ENCODE measurements at regions of chr10 and their contacts with region 1.

Region 1: GRCh38 chr10:86376852-86377796 is 10.5 kb upstream of the GRID1 start:
- DNase-seq: peak; percentile 22
- ATAC-seq: peak; percentile 99
- H3K4me3 ChIP-seq: no peak overlapping the region
- H3K27ac ChIP-seq: no peak overlapping the region
- H3K4me1 ChIP-seq: no peaks in the 10 kb centered on the region
- H3K27me3 ChIP-seq: peaks cover 11% of the 10 kb centered on the region
- CTCF ChIP-seq: peak; percentile 100

Region 2: DNA sequence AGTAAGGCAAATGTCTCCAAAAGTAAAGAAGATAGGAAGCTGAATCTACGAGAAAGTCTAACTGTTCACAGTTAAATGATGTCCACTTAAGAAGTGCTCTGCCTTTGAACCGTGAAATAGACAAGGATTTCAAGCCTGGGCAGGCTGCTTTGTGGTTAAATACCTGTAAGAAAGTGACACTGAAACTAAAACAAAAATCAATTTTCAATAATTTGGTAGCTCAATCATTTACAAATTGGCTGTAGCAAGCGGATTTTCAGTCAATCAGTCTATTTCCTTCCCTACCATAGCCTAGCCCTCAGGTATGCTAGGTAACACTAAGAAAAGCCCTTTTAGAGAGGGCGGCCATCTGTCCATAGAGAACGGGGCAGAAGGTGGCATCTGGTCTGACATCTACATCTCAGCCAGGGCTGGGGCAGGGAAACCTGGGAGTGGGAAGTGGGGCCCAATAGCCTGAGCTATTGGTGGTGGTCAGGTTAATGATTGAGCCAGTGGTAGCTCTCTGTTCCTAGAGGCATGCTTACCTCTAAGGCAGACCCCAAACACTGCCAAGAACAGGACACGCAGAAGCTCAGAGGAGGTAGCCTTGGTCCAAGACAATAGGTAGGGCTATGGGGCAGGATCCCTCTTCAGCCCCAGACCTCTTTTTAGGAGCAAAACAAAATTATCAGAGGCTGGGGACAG is 1825.5 kb before region 1 on chr10:
- CTCF ChIA-PET with region 1: no interaction called
- POLR2A ChIA-PET with region 1: no interaction called
- in situ Hi-C with region 1: no loop called
- intact Hi-C with region 1: loop called (anchors 10 kb)
- DNase-seq: no peak
- ATAC-seq: no peak
- H3K4me3 ChIP-seq: no peak overlapping the region
- H3K27ac ChIP-seq: no peak overlapping the region
- H3K4me1 ChIP-seq: no peaks in the 10 kb centered on the region
- H3K27me3 ChIP-seq: peaks cover 19% of the 10 kb centered on the region
- CTCF ChIP-seq: no peak

Region 3: DNA sequence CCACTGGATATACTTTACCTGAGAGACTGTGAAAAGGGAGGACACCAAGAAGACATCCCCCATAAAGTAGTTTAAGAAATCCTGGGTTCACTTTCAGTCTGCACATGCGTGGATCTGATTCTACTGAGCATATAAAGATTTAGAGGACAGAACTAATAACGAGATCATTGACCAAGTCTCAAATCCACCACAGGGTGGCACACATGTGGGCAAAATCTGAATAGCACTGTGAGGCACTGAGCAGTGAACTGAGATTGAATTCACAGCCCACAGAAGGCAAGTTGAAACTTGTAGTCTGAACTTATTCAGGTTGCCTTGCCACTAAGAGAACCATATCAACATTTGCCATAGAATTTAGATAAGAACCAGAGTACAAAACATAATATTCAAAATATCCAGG is 829.1 kb before region 1 on chr10:
- CTCF ChIA-PET with region 1: no interaction called
- POLR2A ChIA-PET with region 1: no interaction called
- in situ Hi-C with region 1: no loop called
- intact Hi-C with region 1: loop called (anchors 5 kb)
- DNase-seq: peak; percentile 66
- ATAC-seq: peak; percentile 99
- H3K4me3 ChIP-seq: no peak overlapping the region
- H3K27ac ChIP-seq: peak overlapping the region; percentile 65; the same call in 1 of the 2 replicates
- H3K4me1 ChIP-seq: peaks cover 4% of the 10 kb centered on the region; the same call in 1 of the 2 replicates
- H3K27me3 ChIP-seq: no peaks in the 10 kb centered on the region
- CTCF ChIP-seq: peak; percentile 79

Region 4: DNA sequence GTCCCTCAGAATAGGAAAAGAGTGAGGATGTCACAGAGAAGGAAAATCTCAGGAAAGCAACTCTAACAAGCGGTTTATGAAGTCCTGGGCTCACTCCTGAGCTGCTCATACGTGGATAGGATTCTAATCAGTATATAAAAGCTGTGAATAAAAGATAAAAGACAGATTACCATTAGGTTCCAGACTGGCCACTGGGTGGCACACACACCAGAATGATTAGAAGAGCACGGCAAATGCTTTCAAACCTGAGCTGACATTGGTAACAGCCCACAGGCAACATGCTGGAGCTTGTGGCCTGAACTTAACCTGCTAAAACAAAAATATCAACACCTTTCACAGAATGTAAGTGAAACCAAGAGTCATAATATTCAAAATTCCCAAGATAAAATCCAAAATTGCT is 381.3 kb before region 1 on chr10:
- CTCF ChIA-PET with region 1: no interaction called
- POLR2A ChIA-PET with region 1: no interaction called
- in situ Hi-C with region 1: no loop called
- intact Hi-C with region 1: loop called (anchors 10 kb)
- DNase-seq: no peak
- ATAC-seq: peak; percentile 82
- H3K4me3 ChIP-seq: no peak overlapping the region
- H3K27ac ChIP-seq: no peak overlapping the region
- H3K4me1 ChIP-seq: no peaks in the 10 kb centered on the region
- H3K27me3 ChIP-seq: no peaks in the 10 kb centered on the region; the same call in 1 of the 2 replicates
- CTCF ChIP-seq: peak; percentile 78

Region 5: GRCh38 chr10:86178401-86179152 is 198.5 kb before region 1 on chr10:
- CTCF ChIA-PET with region 1: no interaction called
- POLR2A ChIA-PET with region 1: no interaction called
- in situ Hi-C with region 1: no loop called
- intact Hi-C with region 1: loop called (anchors 10 kb)
- DNase-seq: no peak
- ATAC-seq: peak; percentile 90
- H3K4me3 ChIP-seq: no peak overlapping the region
- H3K27ac ChIP-seq: no peak overlapping the region
- H3K4me1 ChIP-seq: no peaks in the 10 kb centered on the region
- H3K27me3 ChIP-seq: peaks cover 7% of the 10 kb centered on the region; the same call in 1 of the 2 replicates
- CTCF ChIP-seq: peak; percentile 80

Region 6: DNA sequence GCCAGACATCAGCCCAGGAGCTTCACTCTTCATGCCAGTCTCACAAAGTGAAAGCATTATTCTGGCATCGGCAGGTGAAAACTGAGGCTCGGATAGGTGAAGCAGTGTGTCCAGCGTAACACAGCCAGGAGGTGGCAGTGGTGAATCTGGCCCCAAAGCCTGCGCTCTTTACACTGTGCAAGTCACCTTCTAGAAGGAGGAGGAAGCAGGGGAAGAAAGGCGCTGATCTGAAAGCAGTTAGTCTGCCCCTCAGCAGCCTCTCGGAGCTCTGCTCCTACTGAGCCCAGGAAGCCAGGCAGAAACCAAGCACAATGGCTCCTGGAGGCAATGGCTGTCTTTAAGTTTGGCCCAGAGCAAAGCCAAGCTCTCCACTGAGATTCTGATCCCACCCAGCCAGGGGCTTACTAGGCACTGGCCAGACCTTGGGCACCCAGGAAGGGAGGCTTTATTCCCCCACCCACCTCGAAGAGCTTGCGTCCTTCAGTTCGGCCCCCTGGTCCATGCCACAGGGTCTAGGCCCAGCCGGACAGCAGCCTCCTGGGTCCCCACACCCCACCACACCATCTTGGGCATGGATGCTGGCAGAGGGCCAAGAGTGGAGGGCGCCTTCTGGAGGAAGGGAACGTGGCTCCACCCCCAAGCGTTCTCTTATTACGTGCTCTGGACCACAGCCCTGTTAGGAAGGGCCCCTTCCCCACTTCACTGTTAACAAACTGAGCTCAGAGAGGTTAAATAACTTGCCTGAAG is 115.0 kb before region 1 on chr10:
- CTCF ChIA-PET with region 1: no interaction called
- POLR2A ChIA-PET with region 1: no interaction called
- in situ Hi-C with region 1: no loop called
- intact Hi-C with region 1: loop called (anchors 5 kb)
- DNase-seq: peak; percentile 7
- ATAC-seq: peak; percentile 92
- H3K4me3 ChIP-seq: no peak overlapping the region
- H3K27ac ChIP-seq: no peak overlapping the region
- H3K4me1 ChIP-seq: peaks cover 5% of the 10 kb centered on the region; the same call in 1 of the 2 replicates
- H3K27me3 ChIP-seq: 0 out of 2 replicates have a peak, but pooled peaks cover 2% of the 10 kb centered on the region
- CTCF ChIP-seq: peak; percentile 83; the same call in 1 of the 2 replicates